OCI-LY7 (cell line): ENCODE measurements at regions of chr3 and their contacts with region 1.

Region 1: DNA sequence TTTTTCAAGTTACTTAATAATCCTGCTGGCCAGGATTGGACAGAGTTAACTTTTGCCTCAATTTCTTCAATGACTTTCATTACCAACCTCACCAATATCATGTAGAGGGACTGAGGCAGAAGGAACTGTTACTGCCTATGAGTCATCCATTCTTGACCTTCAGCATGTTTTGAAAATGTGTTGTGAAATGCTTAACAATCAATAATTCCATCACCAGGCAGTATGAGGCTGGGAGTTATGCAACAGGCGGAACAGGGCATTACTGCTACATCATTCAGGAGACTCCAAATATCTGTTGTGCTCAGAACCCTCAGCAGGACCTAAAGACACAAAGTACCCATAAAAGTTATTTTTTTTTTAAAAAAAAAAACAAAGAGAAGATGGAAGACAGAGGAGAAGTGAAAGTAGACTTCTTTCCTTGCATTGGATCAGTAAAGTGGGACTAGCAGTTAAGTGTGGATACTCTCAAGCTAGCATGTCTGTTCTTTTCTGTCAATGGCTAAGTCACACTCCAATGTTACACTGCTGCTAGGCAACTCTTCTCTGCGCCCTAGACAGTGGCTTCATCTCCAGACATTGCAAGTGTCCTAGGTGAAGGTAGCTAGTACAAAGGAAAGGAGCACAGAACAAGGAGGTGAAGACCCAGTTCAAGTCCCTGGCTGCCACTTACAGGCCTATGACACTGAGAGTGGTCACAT is 184.9 kb upstream of the LPP start:
- DNase-seq: no peak
- H3K4me3 ChIP-seq: peak overlapping the region; percentile 41
- H3K27ac ChIP-seq: peak overlapping the region; percentile 99
- H3K4me1 ChIP-seq: peaks cover 99% of the 10 kb centered on the region
- CTCF ChIP-seq: no peak; the same call in 1 of the 2 replicates

Region 2: GRCh38 chr3:187852842-187853727 is 115.9 kb before region 1 on chr3:
- CTCF ChIA-PET with region 1: no interaction called
- POLR2A ChIA-PET with region 1: no interaction called
- intact Hi-C with region 1: no loop called
- DNase-seq: no peak
- H3K4me3 ChIP-seq: no peak overlapping the region
- H3K27ac ChIP-seq: no peak overlapping the region
- H3K4me1 ChIP-seq: no peaks in the 10 kb centered on the region
- CTCF ChIP-seq: no peak

Region 3: DNA sequence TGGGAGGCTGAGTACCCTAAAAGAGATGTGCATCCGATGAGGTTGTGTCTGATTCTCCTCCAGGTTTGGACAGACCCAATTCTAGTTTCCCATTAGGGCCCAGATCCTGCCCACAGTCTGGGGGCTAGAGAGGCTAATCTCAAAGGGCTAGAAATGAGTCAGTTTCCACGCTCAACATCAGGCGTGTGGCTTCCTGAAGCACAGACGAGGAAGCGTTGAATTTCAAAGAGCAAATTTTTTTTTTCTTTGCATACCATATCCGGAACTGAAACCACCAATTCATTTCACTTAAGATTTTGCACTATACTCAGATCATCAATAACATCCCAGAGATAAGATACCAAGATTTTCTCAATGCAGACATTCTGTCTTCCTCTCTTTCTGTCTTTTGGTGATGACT is 50.0 kb before region 1 on chr3:
- CTCF ChIA-PET with region 1: no interaction called
- POLR2A ChIA-PET with region 1: interaction called, 63 read pairs
- intact Hi-C with region 1: no loop called
- DNase-seq: peak; percentile 93
- H3K4me3 ChIP-seq: peak overlapping the region; percentile 55
- H3K27ac ChIP-seq: peak overlapping the region; percentile 97
- H3K4me1 ChIP-seq: peaks cover 99% of the 10 kb centered on the region
- CTCF ChIP-seq: no peak

Region 4: GRCh38 chr3:187935623-187936156 is 33.3 kb before region 1 on chr3:
- CTCF ChIA-PET with region 1: interaction called, 5 read pairs
- POLR2A ChIA-PET with region 1: interaction called, 1,356 read pairs
- intact Hi-C with region 1: no loop called
- DNase-seq: peak; percentile 91
- H3K4me3 ChIP-seq: peak overlapping the region; percentile 25
- H3K27ac ChIP-seq: peak overlapping the region; percentile 99
- H3K4me1 ChIP-seq: peaks cover 100% of the 10 kb centered on the region
- CTCF ChIP-seq: no peak

Region 5: DNA sequence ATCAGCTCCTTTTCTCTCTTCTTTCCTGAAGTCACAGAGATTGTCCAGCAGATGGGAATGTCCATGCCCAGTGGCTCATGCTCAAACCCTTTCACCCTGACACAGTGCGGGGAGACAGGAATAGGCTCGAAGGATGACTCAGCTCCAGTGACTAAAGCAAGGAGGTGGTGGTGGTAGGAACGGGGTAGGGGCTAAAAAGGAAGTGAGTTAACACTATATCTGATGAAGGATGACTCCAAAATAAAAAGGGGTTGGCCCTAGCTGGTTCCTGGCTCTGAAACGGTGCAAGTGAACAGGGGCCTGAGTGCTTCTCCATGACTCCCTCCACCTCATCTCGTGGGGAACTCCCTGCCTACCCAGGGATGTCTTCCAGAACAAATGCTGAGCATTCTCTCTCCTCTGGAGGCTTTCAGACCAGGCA is 17.5 kb after region 1 on chr3:
- CTCF ChIA-PET with region 1: no interaction called
- POLR2A ChIA-PET with region 1: interaction called, 163 read pairs
- intact Hi-C with region 1: no loop called
- DNase-seq: no peak
- H3K4me3 ChIP-seq: no peak overlapping the region
- H3K27ac ChIP-seq: peak overlapping the region; percentile 2
- H3K4me1 ChIP-seq: peaks cover 95% of the 10 kb centered on the region
- CTCF ChIP-seq: no peak